Heart left ventricle (tissue), 16 donors: ENCODE measurements at regions of chr2 and their contacts with region 1.

Region 1: GRCh38 chr2:191165176-191165643 is 14.4 kb upstream of the STAT4 start:
- DNase-seq: no peak
- ATAC-seq: peak; percentile 65 to 85 (median 80)
- H3K4me3 ChIP-seq: no peak overlapping the region
- H3K27ac ChIP-seq: peak overlapping the region in 3 of 12 donors; percentile 8 to 55 (median 33)
- H3K4me1 ChIP-seq: peaks cover 0 to 32% (median 21%) of the 10 kb centered on the region in 12 donors
- H3K27me3 ChIP-seq: no peaks in the 10 kb centered on the region
- CTCF ChIP-seq: peak; percentile 48 to 77 (median 70)
- POLR2A ChIP-seq: no peak

Region 2: DNA sequence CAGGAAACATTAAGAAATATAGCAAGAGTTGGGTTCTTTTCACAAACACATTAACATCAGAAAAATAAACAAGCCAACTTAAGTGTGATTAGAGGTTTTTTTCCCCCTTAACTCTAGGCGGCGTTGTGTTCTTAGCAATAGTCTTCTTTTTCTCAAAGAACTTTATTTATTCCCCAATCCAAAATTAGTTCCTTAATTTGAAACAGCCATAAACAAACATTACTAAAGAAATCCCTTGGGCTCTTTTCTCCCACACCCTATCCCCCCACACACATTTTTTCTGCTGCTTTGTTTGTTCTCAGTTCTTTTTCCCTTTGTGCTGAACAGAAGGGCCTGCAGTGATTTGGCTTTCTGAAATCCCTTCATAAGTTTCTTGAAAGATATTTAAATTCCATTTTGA is 66.8 kb after region 1 on chr2:
- intact Hi-C with region 1: loop called in 1 of 10 experiments (anchors 5 kb)
- DNase-seq: no peak
- ATAC-seq: peak in 2 of 4 donors; percentile 21 to 30
- H3K4me3 ChIP-seq: no peak overlapping the region
- H3K27ac ChIP-seq: peak overlapping the region in 10 of 12 donors; percentile 2 to 77 (median 63)
- H3K4me1 ChIP-seq: peaks cover 0 to 32% (median 7%) of the 10 kb centered on the region in 12 donors
- H3K27me3 ChIP-seq: no peaks in the 10 kb centered on the region
- CTCF ChIP-seq: peak; percentile 18 to 66 (median 45)
- POLR2A ChIP-seq: no peak

Region 3: DNA sequence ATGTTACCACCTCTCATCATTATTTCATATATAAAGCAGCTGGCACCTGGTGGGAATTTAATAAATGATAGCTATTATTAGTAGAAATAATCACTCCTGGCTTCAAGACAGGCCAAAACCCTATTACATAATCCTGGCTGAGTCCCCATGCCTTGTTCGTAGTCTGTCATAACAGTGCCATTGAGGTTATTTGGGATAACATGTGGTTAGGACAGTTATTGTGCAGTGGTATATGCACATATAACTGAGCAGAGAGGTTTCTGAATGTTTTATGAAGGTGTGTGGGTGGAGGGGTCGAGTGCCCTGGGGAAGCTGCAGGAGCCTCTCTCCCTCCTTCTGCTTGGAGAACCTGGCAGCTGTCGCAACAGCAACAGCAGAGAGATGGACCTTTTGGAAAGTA is 350.3 kb after region 1 on chr2:
- intact Hi-C with region 1: loop called in 3 of 10 experiments (anchors 5 kb)
- DNase-seq: no peak
- ATAC-seq: peak in 3 of 4 donors; percentile 31 to 53 (median 33)
- H3K4me3 ChIP-seq: no peak overlapping the region
- H3K27ac ChIP-seq: no peak overlapping the region
- H3K4me1 ChIP-seq: peaks cover 0 to 15% (median 0%) of the 10 kb centered on the region in 12 donors
- H3K27me3 ChIP-seq: no peaks in the 10 kb centered on the region
- CTCF ChIP-seq: no peak
- POLR2A ChIP-seq: no peak

Region 4: DNA sequence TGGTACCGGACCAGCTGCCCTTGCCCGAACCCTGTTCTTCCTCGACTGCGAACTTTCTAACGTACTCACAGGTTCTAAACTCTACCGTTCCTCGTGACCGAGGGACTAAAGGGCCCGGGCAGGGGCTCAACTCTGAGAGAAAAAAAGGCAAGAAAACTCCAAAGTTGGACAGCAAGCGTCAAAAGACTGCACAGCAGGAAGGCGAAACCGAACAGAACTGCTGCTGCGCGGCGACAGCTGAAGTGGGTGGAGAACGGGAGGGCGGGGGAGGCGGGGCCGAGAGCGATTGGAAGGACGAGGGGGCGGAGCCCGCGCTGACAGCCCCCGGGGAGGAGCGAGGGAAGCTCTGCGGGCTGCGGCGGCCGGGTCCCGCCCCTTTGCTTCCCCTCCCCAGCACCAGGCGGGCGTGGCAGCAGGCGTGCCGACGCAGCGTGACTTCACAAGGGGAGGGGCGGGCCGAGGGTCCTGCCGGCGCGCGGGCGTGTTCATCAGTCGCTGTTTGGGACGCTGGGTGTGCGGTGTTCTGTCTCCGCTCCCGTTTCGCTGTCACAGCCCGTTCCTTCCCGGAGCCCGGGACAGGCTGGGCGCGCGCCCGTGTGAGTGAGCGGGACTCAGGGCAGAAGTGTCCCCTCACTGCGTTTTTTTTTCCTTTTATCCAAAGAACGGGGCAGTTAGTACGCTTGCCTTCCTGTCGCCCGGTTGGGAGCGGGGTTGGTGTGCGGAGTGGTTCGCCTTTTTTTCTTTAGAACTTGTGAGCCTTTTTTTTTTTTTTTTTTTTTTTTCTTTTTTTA is 512.6 kb after region 1 on chr2 and contains the start of gene NABP1:
- intact Hi-C with region 1: loop called in 1 of 10 experiments (anchors 10 kb)
- DNase-seq: peak; percentile 99 to 100 (median 99)
- ATAC-seq: peak; percentile 98 to 100 (median 99)
- H3K4me3 ChIP-seq: peak within 1 kb of the TSS; percentile 50 to 84 (median 69)
- H3K27ac ChIP-seq: peak within 1 kb of the TSS; percentile 82 to 99 (median 92)
- H3K4me1 ChIP-seq: peaks cover 0 to 68% (median 5%) of the 10 kb centered on the region in 12 donors
- H3K27me3 ChIP-seq: no peaks in the 10 kb centered on the region
- CTCF ChIP-seq: no peak
- POLR2A ChIP-seq: peak; percentile 84 to 99
- total RNA-seq, gene NABP1: 1.5 to 36.3 (median 3.3) TPM